H1 (cell line): ENCODE measurements at regions of chr17 and their contacts with region 1.

Region 1: GRCh38 chr17:29764748-29765147 is 142.0 kb upstream of the CORO6 start:
- DNase-seq: no peak
- H3K4me3 ChIP-seq: no peak overlapping the region
- H3K27ac ChIP-seq: no peak overlapping the region
- H3K4me1 ChIP-seq: peaks cover 0 to 3% (median 2%) of the 10 kb centered on the region in 4 experiments; a peak in 5 of 7 replicates
- H3K27me3 ChIP-seq: peaks cover 0 to 11% (median 1%) of the 10 kb centered on the region in 4 experiments; a peak in 3 of 7 replicates
- CTCF ChIP-seq: no peak
- EP300 ChIP-seq: no peak
- POLR2A ChIP-seq: no peak
- RAD21 ChIP-seq: no peak

Region 2: GRCh38 chr17:29777663-29778062 is 12.9 kb after region 1 on chr17:
- CTCF ChIA-PET with region 1: interaction called, 10 read pairs
- POLR2A ChIA-PET with region 1: no interaction called
- DNase-seq: no peak
- H3K4me3 ChIP-seq: no peak overlapping the region
- H3K27ac ChIP-seq: no peak overlapping the region
- H3K4me1 ChIP-seq: no peaks in the 10 kb centered on the region
- H3K27me3 ChIP-seq: no peaks in the 10 kb centered on the region
- CTCF ChIP-seq: no peak
- EP300 ChIP-seq: no peak
- POLR2A ChIP-seq: no peak
- RAD21 ChIP-seq: no peak